RWPE1 (cell line): ENCODE measurements at regions of chr20 and their contacts with region 1.

Region 1: GRCh38 chr20:3795511-3796468 is at the start of gene CDC25B:
- DNase-seq: peak; percentile 93
- H3K27ac ChIP-seq: peak within 1 kb of the TSS; percentile 100
- CTCF ChIP-seq: no peak

Region 2: GRCh38 chr20:2507875-2508630 is 1287.7 kb before region 1 on chr20:
- CTCF ChIA-PET with region 1: no interaction called
- POLR2A ChIA-PET with region 1: interaction called, 13 read pairs
- DNase-seq: peak; percentile 50
- H3K27ac ChIP-seq: peak overlapping the region; percentile 76
- CTCF ChIP-seq: no peak

Region 3: GRCh38 chr20:3753098-3753980 is 42.5 kb before region 1 on chr20:
- CTCF ChIA-PET with region 1: no interaction called
- POLR2A ChIA-PET with region 1: no interaction called
- DNase-seq: no peak
- H3K27ac ChIP-seq: peak overlapping the region; percentile 23; the same call in 1 of the 2 replicates
- CTCF ChIP-seq: peak; percentile 71

Region 4: DNA sequence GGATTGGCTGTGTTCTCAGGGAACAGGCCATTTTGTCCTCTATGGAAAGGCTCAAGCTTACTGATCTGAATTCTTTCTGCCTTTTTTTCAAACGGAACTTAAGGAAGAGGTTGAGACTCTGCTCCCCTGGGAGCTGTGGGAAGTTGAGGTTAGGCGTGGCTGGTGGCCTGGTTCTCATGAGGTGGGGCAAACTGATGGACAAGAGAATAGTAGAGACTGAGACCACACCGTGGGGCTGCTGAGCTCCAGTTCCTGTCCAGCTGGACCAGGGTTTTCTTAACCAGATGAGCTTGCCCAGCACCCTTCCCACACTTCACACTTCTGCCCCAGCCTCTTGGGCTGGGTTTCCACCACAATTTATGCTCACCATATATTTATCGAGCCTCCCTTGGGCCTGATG is 30.6 kb after region 1 on chr20:
- CTCF ChIA-PET with region 1: no interaction called
- POLR2A ChIA-PET with region 1: no interaction called
- DNase-seq: no peak
- H3K27ac ChIP-seq: peak overlapping the region; percentile 6; the same call in 1 of the 2 replicates
- CTCF ChIP-seq: no peak

Region 5: DNA sequence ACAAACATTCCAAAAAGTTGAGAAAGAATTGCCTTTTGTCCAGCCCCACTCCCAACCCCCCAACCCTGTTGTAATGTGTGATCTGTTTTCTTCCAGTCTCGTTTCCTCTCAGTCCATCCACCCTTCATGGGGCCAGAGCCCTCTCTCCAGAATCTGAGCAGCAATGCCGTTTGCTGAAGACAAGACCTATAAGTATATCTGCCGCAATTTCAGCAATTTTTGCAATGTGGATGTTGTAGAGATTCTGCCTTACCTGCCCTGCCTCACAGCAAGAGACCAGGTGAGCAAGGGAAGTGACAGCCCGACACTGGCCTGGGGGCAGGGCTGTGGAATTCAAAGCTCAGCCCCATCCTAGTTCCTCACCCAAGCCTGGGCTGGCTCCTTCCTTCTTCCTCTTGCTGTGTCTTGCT is 58.7 kb after region 1 on chr20:
- CTCF ChIA-PET with region 1: no interaction called
- POLR2A ChIA-PET with region 1: no interaction called
- DNase-seq: no peak
- H3K27ac ChIP-seq: peak overlapping the region; percentile 61
- CTCF ChIP-seq: no peak